ENCODE measurements at regions of chr6 and their contacts with region 1.

Region 1: GRCh38 chr6:27146706-27147505 is 100.6 kb upstream of the PRSS16 start:
- DNase-seq: peak; percentile 85
- ATAC-seq: peak; percentile 72
- H3K4me3 Mint-ChIP-seq: no peak overlapping the region
- H3K27ac Mint-ChIP-seq: no peak overlapping the region
- H3K4me1 Mint-ChIP-seq: peaks cover 13% of the 10 kb centered on the region
- H3K27me3 Mint-ChIP-seq: no peaks in the 10 kb centered on the region
- CTCF ChIP-seq: no peak

Region 2: GRCh38 chr6:26031595-26032339 is 1115.1 kb before region 1 on chr6:
- CTCF ChIA-PET with region 1: no interaction called
- POLR2A ChIA-PET with region 1: interaction called, 32 read pairs
- intact Hi-C with region 1: no loop called
- DNase-seq: peak; percentile 95
- ATAC-seq: peak; percentile 66
- H3K4me3 Mint-ChIP-seq: peak overlapping the region; percentile 91
- H3K27ac Mint-ChIP-seq: peak overlapping the region; percentile 98
- H3K4me1 Mint-ChIP-seq: peaks cover 50% of the 10 kb centered on the region
- H3K27me3 Mint-ChIP-seq: peaks cover 3% of the 10 kb centered on the region
- CTCF ChIP-seq: no peak

Region 3: DNA sequence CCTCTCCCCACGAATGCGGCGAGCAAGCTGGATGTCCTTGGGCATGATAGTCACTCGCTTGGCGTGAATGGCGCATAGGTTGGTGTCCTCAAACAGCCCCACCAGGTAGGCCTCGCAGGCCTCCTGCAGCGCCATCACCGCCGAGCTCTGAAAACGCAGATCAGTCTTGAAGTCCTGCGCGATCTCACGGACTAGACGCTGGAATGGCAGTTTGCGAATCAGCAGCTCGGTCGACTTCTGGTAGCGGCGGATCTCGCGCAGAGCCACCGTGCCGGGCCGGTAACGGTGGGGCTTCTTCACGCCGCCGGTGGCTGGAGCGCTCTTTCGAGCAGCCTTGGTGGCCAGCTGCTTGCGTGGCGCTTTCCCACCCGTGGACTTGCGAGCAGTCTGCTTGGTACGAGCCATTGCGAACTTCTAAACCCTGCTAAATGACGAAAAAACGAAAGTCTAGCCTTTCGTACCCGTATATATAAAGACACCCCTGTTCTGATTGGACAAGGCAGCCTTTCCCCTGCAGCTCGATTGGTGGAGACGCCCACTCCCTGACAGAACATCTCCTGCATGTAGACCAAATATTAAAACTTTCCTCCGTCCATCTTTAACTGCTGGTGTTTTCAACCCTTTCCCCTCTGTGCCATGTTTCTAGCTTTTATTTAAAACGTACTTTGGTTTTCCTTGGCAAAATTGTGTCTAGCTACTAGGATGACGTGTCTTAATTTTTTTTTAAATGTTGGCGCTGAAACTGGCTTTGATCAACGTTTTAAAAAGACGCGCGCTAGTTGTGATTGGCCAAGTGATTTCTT is 949.9 kb before region 1 on chr6:
- CTCF ChIA-PET with region 1: no interaction called
- POLR2A ChIA-PET with region 1: interaction called, 34 read pairs
- intact Hi-C with region 1: no loop called
- DNase-seq: peak; percentile 86
- ATAC-seq: peak; percentile 48
- H3K4me3 Mint-ChIP-seq: peak overlapping the region; percentile 96
- H3K27ac Mint-ChIP-seq: peak overlapping the region; percentile 96
- H3K4me1 Mint-ChIP-seq: peaks cover 24% of the 10 kb centered on the region
- H3K27me3 Mint-ChIP-seq: no peaks in the 10 kb centered on the region
- CTCF ChIP-seq: no peak

Region 4: DNA sequence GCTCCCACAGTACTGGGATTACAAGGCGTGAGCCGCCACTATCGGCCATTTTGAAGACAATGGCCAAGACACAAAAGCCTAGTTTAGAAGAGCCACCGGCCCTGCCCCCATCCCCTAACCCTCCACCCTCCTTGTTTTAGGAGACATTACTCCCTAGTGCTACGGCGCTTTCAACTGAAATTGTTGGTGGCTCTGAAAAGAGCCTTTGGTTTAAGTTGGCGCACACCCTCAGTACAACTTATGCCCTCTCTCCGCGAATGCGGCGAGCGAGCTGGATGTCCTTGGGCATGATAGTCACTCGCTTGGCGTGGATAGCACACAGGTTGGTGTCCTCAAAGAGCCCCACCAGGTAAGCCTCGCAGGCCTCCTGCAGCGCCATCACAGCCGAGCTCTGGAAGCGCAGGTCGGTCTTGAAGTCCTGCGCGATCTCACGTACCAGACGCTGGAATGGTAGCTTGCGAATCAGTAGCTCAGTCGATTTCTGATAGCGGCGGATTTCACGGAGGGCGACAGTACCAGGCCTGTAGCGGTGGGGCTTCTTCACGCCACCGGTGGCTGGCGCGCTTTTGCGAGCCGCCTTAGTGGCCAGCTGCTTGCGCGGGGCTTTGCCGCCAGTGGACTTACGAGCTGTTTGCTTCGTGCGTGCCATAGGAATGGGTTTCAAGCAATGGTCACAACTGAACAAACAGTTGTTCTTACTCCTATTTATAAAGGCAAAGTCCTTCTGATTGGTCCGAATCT is 896.8 kb before region 1 on chr6:
- CTCF ChIA-PET with region 1: no interaction called
- POLR2A ChIA-PET with region 1: interaction called, 16 read pairs
- intact Hi-C with region 1: no loop called
- DNase-seq: peak; percentile 84
- ATAC-seq: peak; percentile 68
- H3K4me3 Mint-ChIP-seq: peak overlapping the region; percentile 82
- H3K27ac Mint-ChIP-seq: peak overlapping the region; percentile 99
- H3K4me1 Mint-ChIP-seq: peaks cover 27% of the 10 kb centered on the region
- H3K27me3 Mint-ChIP-seq: no peaks in the 10 kb centered on the region
- CTCF ChIP-seq: peak; percentile 43

Region 5: GRCh38 chr6:27049863-27050781 is 96.8 kb before region 1 on chr6:
- CTCF ChIA-PET with region 1: no interaction called
- POLR2A ChIA-PET with region 1: no interaction called
- intact Hi-C with region 1: no loop called
- DNase-seq: no peak
- ATAC-seq: no peak
- H3K4me3 Mint-ChIP-seq: no peak overlapping the region
- H3K27ac Mint-ChIP-seq: no peak overlapping the region
- H3K4me1 Mint-ChIP-seq: no peaks in the 10 kb centered on the region
- H3K27me3 Mint-ChIP-seq: peaks cover 10% of the 10 kb centered on the region
- CTCF ChIP-seq: no peak

Region 6: GRCh38 chr6:27106382-27106781 is 40.5 kb before region 1 on chr6:
- CTCF ChIA-PET with region 1: no interaction called
- POLR2A ChIA-PET with region 1: no interaction called
- intact Hi-C with region 1: no loop called
- DNase-seq: no peak
- ATAC-seq: no peak
- H3K4me3 Mint-ChIP-seq: no peak overlapping the region
- H3K27ac Mint-ChIP-seq: no peak overlapping the region
- H3K4me1 Mint-ChIP-seq: no peaks in the 10 kb centered on the region
- H3K27me3 Mint-ChIP-seq: peaks cover 14% of the 10 kb centered on the region
- CTCF ChIP-seq: no peak

Region 7: DNA sequence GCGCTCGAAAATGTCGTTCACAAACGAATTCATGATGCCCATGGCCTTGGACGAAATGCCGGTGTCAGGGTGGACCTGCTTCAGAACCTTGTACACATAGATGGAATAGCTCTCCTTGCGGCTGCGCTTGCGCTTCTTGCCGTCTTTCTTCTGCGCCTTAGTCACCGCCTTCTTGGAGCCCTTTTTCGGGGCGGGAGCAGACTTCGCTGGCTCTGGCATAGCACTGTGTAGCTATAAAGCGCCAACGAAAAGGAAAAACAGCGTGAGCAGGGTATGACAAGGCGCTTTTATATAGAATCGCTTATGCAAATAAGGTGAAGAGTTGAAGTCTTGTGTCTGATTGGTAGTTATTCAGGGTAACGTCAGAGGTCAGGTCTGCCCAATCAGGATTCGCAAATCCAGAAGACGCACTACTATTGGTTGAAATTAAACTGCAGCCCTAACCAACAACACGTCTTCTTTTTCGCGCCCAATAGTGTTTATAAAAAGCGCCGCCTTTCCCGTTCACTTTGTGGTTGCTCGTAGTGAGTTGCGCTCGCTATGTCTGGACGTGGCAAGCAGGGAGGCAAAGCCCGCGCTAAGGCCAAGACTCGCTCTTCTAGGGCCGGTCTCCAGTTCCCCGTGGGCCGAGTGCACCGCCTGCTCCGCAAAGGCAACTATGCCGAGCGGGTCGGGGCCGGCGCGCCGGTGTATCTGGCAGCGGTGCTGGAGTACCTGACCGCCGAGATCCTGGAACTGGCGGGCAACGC is 14.2 kb before region 1 on chr6:
- CTCF ChIA-PET with region 1: interaction called, 15 read pairs
- POLR2A ChIA-PET with region 1: interaction called, 692 read pairs
- intact Hi-C with region 1: loop called (anchors 2 kb)
- DNase-seq: peak; percentile 93
- ATAC-seq: peak; percentile 82
- H3K4me3 Mint-ChIP-seq: no peak overlapping the region
- H3K27ac Mint-ChIP-seq: no peak overlapping the region
- H3K4me1 Mint-ChIP-seq: peaks cover 18% of the 10 kb centered on the region
- H3K27me3 Mint-ChIP-seq: no peaks in the 10 kb centered on the region
- CTCF ChIP-seq: no peak

Region 8: DNA sequence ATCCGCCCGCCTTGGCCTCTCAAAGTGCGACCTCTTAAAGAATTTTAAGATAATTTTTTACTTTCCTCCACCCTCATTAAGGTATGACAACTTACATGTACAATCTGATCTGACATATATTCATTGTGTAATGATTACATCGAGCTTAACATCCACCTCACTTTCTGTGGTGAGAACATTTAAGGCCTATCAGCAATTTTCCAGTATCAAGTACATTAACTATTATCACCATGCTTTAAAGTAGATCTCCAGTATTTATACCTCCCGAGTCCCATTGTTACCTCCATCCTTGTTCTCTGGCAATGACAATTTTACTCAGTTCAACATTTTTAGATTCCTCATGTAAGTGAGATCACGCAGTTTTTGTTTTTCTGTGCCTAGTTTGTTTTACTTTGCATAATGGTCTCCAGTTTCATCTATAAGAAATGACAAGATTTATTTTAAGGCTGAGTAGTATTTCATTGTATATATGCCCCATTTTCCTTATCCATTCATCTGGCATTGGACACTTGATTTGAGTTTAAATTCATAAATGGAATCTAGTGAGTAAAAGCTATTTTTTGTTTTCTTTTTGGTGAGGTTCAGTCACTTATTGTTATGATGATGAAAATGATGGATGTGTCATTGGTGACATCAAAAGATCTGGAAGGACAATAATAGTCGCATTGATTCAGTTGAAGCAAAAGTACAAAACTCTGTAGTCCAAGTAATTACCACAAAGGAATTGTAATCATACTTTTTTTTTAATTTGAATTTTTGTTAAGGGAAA is 678.3 kb after region 1 on chr6:
- CTCF ChIA-PET with region 1: no interaction called
- POLR2A ChIA-PET with region 1: interaction called, 26 read pairs
- intact Hi-C with region 1: no loop called
- DNase-seq: no peak
- ATAC-seq: peak; percentile 1
- H3K4me3 Mint-ChIP-seq: peak overlapping the region; percentile 91
- H3K27ac Mint-ChIP-seq: peak overlapping the region; percentile 99
- H3K4me1 Mint-ChIP-seq: peaks cover 25% of the 10 kb centered on the region
- H3K27me3 Mint-ChIP-seq: no peaks in the 10 kb centered on the region
- CTCF ChIP-seq: no peak

Region 9: GRCh38 chr6:27893059-27893835 is 746.3 kb after region 1 on chr6:
- CTCF ChIA-PET with region 1: no interaction called
- POLR2A ChIA-PET with region 1: interaction called, 69 read pairs
- intact Hi-C with region 1: loop called (anchors 10 kb)
- DNase-seq: peak; percentile 92
- ATAC-seq: peak; percentile 63
- H3K4me3 Mint-ChIP-seq: no peak overlapping the region
- H3K27ac Mint-ChIP-seq: no peak overlapping the region
- H3K4me1 Mint-ChIP-seq: peaks cover 28% of the 10 kb centered on the region
- H3K27me3 Mint-ChIP-seq: no peaks in the 10 kb centered on the region
- CTCF ChIP-seq: no peak

Measured in activated CD8-positive, alpha-beta T cell treated with anti-CD3 and anti-CD28 coated beads for 36 hours (primary cell).